ENCODE measurements at regions of chr18 and their contacts with region 1.

Region 1: GRCh38 chr18:13611601-13612195 is 114.7 kb downstream of the FAM210A start:
- DNase-seq: no peak
- H3K4me3 ChIP-seq: peak overlapping the region in 6 of 7 experiments; percentile 38 to 79 (median 63)
- H3K27ac ChIP-seq: peak overlapping the region; percentile 30 to 65
- H3K4me1 ChIP-seq: peaks cover 21 to 78% (median 66%) of the 10 kb centered on the region in 4 experiments
- H3K27me3 ChIP-seq: no peaks in the 10 kb centered on the region

Region 2: GRCh38 chr18:13566941-13567746 is 44.6 kb before region 1 on chr18:
- CTCF ChIA-PET with region 1: interaction called, 141 read pairs
- POLR2A ChIA-PET with region 1: interaction called, 20 read pairs
- DNase-seq: peak; percentile 56 to 85 (median 76)
- H3K4me3 ChIP-seq: peak overlapping the region in 4 of 7 experiments; percentile 15 to 49 (median 32)
- H3K27ac ChIP-seq: peak overlapping the region; percentile 65 to 78
- H3K4me1 ChIP-seq: peaks cover 26 to 81% (median 59%) of the 10 kb centered on the region in 4 experiments
- H3K27me3 ChIP-seq: no peaks in the 10 kb centered on the region

Region 3: DNA sequence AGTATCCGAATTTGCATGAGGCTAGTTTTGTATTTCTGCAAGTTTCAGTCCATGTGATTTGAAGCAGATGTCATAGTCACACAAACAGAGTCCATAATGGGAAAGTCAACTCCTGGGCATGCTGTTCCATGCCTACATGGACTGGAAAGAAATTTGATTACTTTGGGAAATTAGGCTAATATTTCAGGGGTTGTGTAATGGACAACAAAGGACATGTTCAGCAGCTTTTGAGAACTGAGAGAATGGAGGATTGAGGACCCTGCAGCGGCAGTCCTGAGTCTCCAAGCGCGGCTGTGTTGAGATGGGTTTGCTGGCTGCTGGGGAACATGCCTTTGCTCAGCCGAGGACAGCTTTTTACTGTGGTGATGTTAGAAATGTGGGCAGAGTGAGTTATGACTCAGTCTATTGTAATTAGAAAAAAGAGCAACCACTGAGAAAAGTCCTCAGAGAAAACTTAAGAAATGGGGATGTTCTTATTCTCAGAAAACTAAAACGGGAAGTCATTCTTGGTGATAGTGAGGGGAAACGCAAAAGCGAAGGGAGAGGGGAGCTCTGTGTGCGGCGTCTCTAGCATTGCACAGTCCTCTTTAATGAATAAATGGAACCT is 34.5 kb before region 1 on chr18:
- CTCF ChIA-PET with region 1: interaction called, 7 read pairs
- POLR2A ChIA-PET with region 1: interaction called, 18 read pairs
- DNase-seq: peak; percentile 66 to 91 (median 88)
- H3K4me3 ChIP-seq: peak overlapping the region in 4 of 7 experiments; percentile 2 to 51 (median 28)
- H3K27ac ChIP-seq: no peak overlapping the region
- H3K4me1 ChIP-seq: peaks cover 13 to 56% (median 34%) of the 10 kb centered on the region in 4 experiments
- H3K27me3 ChIP-seq: no peaks in the 10 kb centered on the region

Region 4: DNA sequence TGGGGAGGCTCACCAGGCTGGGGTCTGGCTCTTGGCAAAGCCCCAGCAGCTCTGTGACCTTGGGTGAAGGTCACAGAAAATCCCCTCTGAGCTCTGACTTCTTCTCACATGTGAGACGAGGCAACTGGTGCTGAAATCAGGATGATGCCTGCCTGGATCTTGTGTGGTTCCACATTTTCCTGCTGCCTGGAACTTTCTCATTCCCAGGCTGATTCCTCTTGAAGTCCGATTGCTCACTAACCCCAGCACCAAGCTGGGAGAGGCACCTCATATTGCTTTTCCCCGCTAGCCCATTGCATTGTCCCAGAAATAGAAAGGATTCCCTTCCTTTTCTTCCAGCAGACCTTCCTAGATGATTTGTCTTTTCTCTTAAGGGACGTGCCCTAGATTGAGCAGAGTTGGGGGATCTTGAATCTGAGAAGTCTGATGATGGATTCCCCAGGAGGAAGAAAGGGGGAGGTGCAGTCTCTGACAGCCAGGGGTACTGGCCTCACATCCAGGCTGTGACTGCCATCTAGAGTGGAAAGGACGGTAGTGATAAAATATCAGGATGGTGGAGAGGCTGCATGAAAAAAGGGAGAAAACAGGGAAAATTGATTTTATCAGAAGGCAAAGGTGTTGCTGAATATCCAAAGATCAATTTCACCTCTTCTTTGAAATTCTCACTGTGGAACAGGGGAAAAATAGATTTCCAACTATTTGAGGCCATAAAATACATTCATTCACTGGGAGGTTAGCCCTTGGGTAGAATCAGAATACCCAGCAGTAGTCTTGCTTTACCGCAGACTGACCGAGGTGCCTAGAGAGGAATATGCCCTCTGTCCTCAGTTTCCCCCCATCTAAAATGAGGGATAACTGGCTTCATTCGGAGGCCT is 18.4 kb after region 1 on chr18:
- CTCF ChIA-PET with region 1: interaction called, 19 read pairs
- POLR2A ChIA-PET with region 1: interaction called, 10 read pairs
- DNase-seq: peak; percentile 75 to 85 (median 84)
- H3K4me3 ChIP-seq: no peak overlapping the region
- H3K27ac ChIP-seq: no peak overlapping the region
- H3K4me1 ChIP-seq: peaks cover 12 to 26% (median 15%) of the 10 kb centered on the region in 4 experiments
- H3K27me3 ChIP-seq: no peaks in the 10 kb centered on the region

Region 5: GRCh38 chr18:13889666-13890065 is 278.0 kb after region 1 on chr18:
- CTCF ChIA-PET with region 1: no interaction called
- POLR2A ChIA-PET with region 1: no interaction called
- DNase-seq: no peak
- H3K4me3 ChIP-seq: no peak overlapping the region
- H3K27ac ChIP-seq: no peak overlapping the region
- H3K4me1 ChIP-seq: no peaks in the 10 kb centered on the region
- H3K27me3 ChIP-seq: peaks cover 0 to 3% (median 0%) of the 10 kb centered on the region in 5 experiments

Measured in common myeloid progenitor, CD34-positive (primary cell).